ENCODE measurements at regions of chr5 and their contacts with region 1.

Region 1: GRCh38 chr5:157502143-157502647 is 42.2 kb downstream of the NIPAL4 start:
- DNase-seq: peak; percentile 91
- H3K4me3 ChIP-seq: peak overlapping the region; percentile 42
- H3K27ac ChIP-seq: peak overlapping the region; percentile 100
- H3K4me1 ChIP-seq: peaks cover 93% of the 10 kb centered on the region
- CTCF ChIP-seq: no peak

Region 2: DNA sequence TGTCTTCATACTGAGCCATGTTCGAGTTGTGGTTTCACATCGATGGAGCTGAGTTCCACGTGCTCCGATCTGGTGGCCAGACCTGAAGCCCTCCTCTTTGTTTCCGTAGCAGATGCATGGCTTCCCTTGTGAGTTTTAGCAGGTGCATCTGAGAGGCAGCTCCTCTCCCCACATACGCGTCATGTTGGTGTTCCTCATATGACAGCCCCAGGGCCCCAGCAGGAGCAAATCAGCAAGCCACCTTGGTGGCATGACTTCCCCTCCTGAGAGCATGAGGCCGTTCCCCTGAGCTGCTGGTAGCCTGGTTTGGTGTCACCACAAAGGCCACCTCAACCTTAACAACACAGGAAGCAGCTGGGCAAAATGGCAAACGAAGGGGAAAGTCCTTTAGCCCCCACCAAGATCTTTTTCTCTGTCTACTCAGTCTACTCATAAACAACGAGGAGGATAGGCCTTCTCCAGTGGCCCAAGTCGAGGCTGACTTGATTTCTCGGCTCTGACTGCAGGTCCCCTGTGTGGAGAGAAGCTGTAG is 230.4 kb before region 1 on chr5:
- CTCF ChIA-PET with region 1: no interaction called
- POLR2A ChIA-PET with region 1: interaction called, 4 read pairs
- intact Hi-C with region 1: loop called (anchors 5 kb)
- DNase-seq: peak; percentile 98
- H3K4me3 ChIP-seq: peak overlapping the region; percentile 82
- H3K27ac ChIP-seq: peak overlapping the region; percentile 98
- H3K4me1 ChIP-seq: peaks cover 93% of the 10 kb centered on the region
- CTCF ChIP-seq: no peak

Region 3: GRCh38 chr5:157540707-157541446 is 38.7 kb after region 1 on chr5:
- CTCF ChIA-PET with region 1: no interaction called
- POLR2A ChIA-PET with region 1: interaction called, 4 read pairs
- intact Hi-C with region 1: loop called (anchors 1 kb)
- DNase-seq: peak; percentile 39
- H3K4me3 ChIP-seq: peak overlapping the region; percentile 38
- H3K27ac ChIP-seq: no peak overlapping the region
- H3K4me1 ChIP-seq: peaks cover 37% of the 10 kb centered on the region
- CTCF ChIP-seq: no peak

Region 4: DNA sequence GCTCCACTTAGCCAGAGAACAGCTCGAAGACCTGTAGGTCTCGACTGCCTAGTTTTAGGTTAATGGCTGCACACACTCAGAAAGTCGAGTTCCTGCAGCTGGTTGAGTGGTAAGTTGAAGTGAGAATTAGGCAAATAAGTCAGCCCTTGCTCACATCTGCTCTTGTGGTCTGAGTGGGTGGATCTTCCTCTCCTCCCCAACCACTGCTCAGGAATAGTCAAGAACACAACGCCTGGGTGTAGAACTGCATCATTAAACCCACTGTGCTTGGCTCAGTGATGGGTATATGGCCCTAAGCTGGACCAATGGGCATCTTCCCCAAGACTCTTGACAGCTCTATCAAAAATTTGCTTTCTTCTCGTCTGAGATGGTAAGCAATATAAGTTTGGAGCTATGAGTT is 94.3 kb after region 1 on chr5:
- CTCF ChIA-PET with region 1: no interaction called
- POLR2A ChIA-PET with region 1: interaction called, 13 read pairs
- intact Hi-C with region 1: loop called (anchors 1 kb)
- DNase-seq: peak; percentile 94
- H3K4me3 ChIP-seq: peak overlapping the region; percentile 18
- H3K27ac ChIP-seq: peak overlapping the region; percentile 83
- H3K4me1 ChIP-seq: peaks cover 96% of the 10 kb centered on the region
- CTCF ChIP-seq: no peak

Region 5: GRCh38 chr5:157731272-157732129 is 229.3 kb after region 1 on chr5 and contains the start of gene THG1L:
- CTCF ChIA-PET with region 1: no interaction called
- POLR2A ChIA-PET with region 1: interaction called, 3 read pairs
- intact Hi-C with region 1: loop called (anchors 1 kb)
- DNase-seq: peak; percentile 96
- H3K4me3 ChIP-seq: peak within 1 kb of the TSS; percentile 75
- H3K27ac ChIP-seq: peak within 1 kb of the TSS; percentile 88
- H3K4me1 ChIP-seq: peaks cover 30% of the 10 kb centered on the region
- CTCF ChIP-seq: no peak
- total RNA-seq, gene THG1L: 20.7 and 30.5 TPM in 2 replicates

Region 6: DNA sequence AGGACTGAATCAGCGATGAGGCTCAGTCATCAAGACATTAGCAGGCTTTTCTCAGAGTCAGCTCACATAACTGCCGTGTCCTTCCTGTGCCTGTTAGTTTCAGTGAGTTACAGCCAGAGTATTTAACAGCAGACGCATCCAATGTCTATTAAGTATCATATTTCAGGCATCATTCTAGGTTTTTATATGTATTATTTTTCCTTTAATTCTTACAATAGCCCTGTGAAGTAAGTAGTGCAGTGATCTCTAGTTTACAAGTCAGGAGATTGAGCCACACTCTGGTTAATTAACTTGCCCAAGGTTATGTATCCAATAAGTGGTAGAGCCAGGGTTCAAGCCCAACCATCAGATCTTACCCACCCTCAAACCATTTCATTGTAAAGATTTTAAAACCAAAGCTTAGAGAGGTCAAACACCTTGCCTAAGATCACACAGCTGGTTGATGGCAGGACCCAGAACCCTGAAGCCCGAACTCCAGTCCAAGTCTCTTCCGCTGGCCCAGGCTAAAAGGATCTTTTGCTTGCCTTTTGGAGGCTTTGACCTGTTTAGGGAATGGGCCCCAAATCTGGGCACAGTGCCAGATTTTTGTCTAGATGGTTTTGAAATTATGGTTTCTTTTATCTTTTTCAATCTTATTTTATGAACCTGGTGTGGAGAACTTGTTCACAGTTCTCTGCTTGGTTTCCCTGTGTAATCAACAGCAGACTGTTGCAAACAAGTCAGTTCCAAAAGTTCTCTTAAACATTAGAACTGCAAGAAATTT is 617.9 kb after region 1 on chr5:
- CTCF ChIA-PET with region 1: no interaction called
- POLR2A ChIA-PET with region 1: no interaction called
- intact Hi-C with region 1: no loop called
- DNase-seq: no peak
- H3K4me3 ChIP-seq: no peak overlapping the region
- H3K27ac ChIP-seq: no peak overlapping the region
- H3K4me1 ChIP-seq: no peaks in the 10 kb centered on the region
- CTCF ChIP-seq: no peak